Activated T-helper 2 cell treated with anti-CD3 and anti-CD28 coated beads, Interferon-gamma antibody, Interleukin-2, Interleukin-4, amounts not matched to agents 10 μg/mL and 5 μg/mL and 100 μg/mL, durations not matched to agents 14 hours and 24 hours and 36 hours (primary cell): ENCODE measurements at regions of chr22 and their contacts with region 1.

Region 1: DNA sequence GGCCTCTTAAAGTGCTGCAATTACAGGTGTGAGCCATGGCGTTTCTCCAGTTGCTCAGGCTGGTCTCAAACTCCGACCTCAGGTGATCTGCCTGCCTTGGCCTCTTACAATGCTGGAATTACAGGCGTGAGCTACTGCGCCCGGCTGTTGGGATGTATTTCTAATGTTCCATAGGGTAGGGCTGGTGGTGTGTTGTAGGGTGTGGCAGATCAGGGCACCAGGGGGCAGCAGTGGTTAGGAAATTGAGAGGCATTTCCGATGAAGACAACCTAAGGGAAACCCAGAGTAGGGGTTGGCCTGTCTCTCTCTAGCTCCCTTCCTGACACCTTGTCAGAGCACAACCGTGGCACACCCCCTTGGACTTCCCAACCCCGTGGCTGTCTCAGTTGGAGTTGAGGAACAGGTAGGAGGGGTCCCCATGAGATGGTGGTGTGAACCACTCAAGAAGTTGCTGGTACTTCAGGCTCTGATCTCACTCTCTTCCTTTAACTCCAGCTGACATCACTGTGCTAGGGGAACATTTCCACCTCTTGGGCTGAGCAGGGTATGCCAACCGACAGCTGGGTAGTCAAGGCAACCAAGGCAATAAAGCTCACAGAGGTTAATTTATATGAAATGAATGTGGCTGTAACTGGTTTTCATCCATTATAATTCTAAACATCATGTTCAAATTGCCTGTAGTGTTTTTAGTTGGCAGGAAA is 33.0 kb downstream of the YWHAH start:
- DNase-seq: peak; percentile 62
- H3K4me3 Mint-ChIP-seq: no peak overlapping the region
- H3K27ac Mint-ChIP-seq: no peak overlapping the region
- H3K4me1 Mint-ChIP-seq: peaks cover 7% of the 10 kb centered on the region
- H3K27me3 Mint-ChIP-seq: peaks cover 9% of the 10 kb centered on the region

Region 2: DNA sequence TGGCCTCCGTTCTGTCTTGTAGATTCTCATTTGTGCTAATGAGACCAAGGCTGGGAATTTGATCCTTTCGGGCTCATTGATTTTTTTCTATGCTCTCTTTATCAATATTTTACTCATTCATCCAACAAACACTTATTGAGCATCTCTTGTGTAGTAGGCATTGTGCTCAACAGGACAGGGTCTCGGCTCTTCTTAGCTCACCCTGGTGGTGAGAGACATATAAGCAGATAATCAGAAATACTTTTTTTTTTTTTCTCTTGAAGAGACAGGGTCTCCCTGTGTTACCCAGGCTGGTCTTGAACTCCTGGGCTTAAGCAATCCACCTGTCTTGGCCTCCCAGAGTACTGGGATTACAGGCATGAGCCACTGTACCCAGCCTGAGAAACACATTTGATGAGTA is 17.8 kb after region 1 on chr22:
- intact Hi-C with region 1: no loop called
- DNase-seq: no peak
- H3K4me3 Mint-ChIP-seq: no peak overlapping the region
- H3K27ac Mint-ChIP-seq: no peak overlapping the region
- H3K4me1 Mint-ChIP-seq: no peaks in the 10 kb centered on the region
- H3K27me3 Mint-ChIP-seq: peaks cover 10% of the 10 kb centered on the region

Region 3: GRCh38 chr22:32048069-32048468 is 70.8 kb after region 1 on chr22:
- intact Hi-C with region 1: no loop called
- DNase-seq: no peak
- H3K4me3 Mint-ChIP-seq: no peak overlapping the region
- H3K27ac Mint-ChIP-seq: no peak overlapping the region
- H3K4me1 Mint-ChIP-seq: peaks cover 15% of the 10 kb centered on the region
- H3K27me3 Mint-ChIP-seq: peaks cover 60% of the 10 kb centered on the region

Region 4: GRCh38 chr22:32058656-32059260 is 81.5 kb after region 1 on chr22:
- intact Hi-C with region 1: no loop called
- DNase-seq: no peak
- H3K4me3 Mint-ChIP-seq: no peak overlapping the region
- H3K27ac Mint-ChIP-seq: no peak overlapping the region
- H3K4me1 Mint-ChIP-seq: no peaks in the 10 kb centered on the region
- H3K27me3 Mint-ChIP-seq: peaks cover 27% of the 10 kb centered on the region

Region 5: GRCh38 chr22:32080904-32081303 is 103.6 kb after region 1 on chr22:
- intact Hi-C with region 1: loop called (anchors 1 kb)
- DNase-seq: no peak
- H3K4me3 Mint-ChIP-seq: no peak overlapping the region
- H3K27ac Mint-ChIP-seq: no peak overlapping the region
- H3K4me1 Mint-ChIP-seq: no peaks in the 10 kb centered on the region
- H3K27me3 Mint-ChIP-seq: peaks cover 28% of the 10 kb centered on the region

Region 6: DNA sequence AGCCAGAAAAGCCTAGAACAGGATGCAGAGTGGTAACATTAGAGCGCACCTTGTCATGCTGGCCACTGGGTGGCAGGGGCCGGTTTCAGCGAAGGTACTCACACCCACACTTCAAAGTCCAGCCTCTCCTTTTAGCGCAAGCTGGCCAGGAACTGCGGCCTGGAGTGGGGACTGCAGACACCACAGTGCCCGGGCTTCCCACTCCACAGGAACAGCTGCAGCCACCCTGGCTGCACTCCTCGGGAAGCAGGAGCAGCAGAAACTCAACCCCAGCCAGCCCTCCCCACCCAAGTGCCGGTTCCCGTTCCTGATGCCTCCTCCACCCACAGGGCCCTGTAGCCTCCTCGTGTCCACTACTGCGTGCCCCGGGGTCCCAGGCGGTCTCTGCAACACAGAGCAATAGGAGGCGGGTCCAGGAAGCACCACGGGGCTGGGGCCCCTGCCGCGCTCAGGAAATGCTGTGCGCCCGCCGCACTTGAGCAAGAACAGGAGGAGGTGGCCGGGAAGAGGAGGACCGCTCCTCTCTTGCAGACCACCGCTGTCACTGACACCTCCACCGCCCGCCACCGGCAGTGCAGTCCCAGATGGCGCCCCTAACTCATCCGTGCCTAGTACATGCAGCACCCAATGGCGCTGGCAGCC is 225.4 kb after region 1 on chr22:
- intact Hi-C with region 1: loop called (anchors 5 kb)
- DNase-seq: no peak
- H3K4me3 Mint-ChIP-seq: peak overlapping the region; percentile 26
- H3K27ac Mint-ChIP-seq: no peak overlapping the region
- H3K4me1 Mint-ChIP-seq: peaks cover 17% of the 10 kb centered on the region
- H3K27me3 Mint-ChIP-seq: peaks cover 13% of the 10 kb centered on the region

Region 7: DNA sequence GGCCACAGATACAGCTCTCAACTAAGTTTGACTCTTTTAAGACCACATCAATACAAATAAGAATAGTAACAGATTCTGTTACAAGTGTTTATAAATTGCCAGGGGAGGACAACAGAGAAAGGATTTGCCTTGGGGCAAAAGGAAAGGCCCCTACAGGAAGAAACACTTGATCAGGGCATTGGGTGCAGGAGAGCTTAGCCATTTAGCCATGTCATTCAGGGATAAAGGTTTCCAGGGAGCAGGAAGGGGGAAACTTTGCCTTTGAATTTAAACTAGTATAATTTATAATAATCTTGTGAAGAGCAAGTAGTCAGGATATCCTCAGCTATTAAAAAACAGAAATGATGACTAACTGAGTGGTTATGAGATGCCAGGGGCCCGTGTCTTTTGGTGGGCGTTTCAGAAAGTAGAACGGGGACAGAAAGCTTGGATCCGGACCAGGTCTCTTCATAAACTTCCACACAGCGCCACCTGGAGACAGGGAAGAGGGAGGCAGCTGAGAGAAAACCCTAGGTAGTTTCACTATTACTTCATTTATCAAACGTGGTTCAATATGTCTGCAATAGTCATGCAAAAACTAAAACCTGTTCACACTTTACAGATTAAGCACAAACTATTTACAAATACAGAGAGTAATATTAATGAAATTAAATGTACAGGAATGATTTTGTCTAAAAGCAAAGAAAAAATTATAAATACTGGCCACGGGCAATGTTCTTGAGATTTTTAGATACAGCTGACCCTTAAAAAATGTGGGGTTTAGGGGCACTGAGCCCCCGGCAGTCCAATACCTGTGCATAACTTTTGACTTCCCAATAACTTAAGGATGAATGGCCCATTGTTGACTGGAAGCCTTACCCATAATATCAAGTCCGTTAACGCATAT is 288.8 kb after region 1 on chr22:
- intact Hi-C with region 1: loop called (anchors 5 kb)
- DNase-seq: peak; percentile 55
- H3K4me3 Mint-ChIP-seq: no peak overlapping the region
- H3K27ac Mint-ChIP-seq: no peak overlapping the region
- H3K4me1 Mint-ChIP-seq: peaks cover 6% of the 10 kb centered on the region
- H3K27me3 Mint-ChIP-seq: no peaks in the 10 kb centered on the region

Region 8: GRCh38 chr22:32286290-32286840 is 309.1 kb after region 1 on chr22:
- intact Hi-C with region 1: no loop called
- DNase-seq: no peak
- H3K4me3 Mint-ChIP-seq: no peak overlapping the region
- H3K27ac Mint-ChIP-seq: no peak overlapping the region
- H3K4me1 Mint-ChIP-seq: no peaks in the 10 kb centered on the region
- H3K27me3 Mint-ChIP-seq: peaks cover 7% of the 10 kb centered on the region